ENCODE measurements at regions of chr13 and their contacts with region 1.

Region 1: GRCh38 chr13:95536632-95537241 is 15.8 kb upstream of the CLDN10 start:
- DNase-seq: no peak
- ATAC-seq: no peak
- H3K4me3 Mint-ChIP-seq: no peak overlapping the region
- H3K27ac Mint-ChIP-seq: no peak overlapping the region
- H3K4me1 Mint-ChIP-seq: no peaks in the 10 kb centered on the region
- H3K27me3 Mint-ChIP-seq: peaks cover 18% of the 10 kb centered on the region
- CTCF ChIP-seq: peak; percentile 33

Region 2: DNA sequence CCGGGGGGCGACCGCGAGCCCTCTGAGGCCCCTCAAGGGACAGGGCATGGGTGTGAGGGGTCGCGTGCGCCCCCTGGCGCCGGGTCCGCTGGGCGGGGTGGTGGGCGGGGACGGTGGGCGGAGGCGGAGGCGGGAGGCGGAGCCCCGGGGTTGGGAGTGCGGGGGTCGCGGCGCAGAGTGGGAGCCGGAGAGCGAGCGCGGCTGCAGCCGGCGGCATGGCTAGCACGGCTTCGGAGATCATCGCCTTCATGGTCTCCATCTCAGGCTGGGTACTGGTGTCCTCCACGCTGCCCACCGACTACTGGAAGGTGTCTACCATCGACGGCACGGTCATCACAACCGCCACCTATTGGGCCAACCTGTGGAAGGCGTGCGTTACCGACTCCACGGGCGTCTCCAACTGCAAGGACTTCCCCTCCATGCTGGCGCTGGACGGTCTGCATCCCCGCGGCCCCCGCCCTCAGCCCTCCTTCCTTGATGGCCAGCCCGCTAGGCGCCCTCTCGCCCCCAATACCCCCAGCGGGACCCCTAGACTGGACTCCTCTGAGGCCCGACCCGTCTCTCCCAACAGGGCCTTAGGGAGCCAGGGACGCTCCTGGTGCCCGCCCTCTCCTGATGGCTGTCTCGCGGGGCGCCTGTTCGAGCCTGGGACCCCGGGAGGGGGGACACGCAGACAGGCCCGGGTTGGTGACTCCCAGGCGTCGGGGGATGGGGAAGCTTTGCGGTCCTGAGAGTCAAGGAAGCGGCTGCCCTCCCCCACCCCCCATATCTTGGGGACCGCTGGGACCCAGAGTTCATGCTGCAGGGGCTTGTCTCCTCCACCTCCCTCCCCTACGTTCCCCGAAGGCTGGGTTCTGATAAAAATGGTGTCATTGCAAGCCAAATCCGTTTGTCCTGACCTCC is 16.1 kb after region 1 on chr13 and contains the start of gene CLDN10:
- CTCF ChIA-PET with region 1: no interaction called
- POLR2A ChIA-PET with region 1: no interaction called
- intact Hi-C with region 1: loop called (anchors 1 kb)
- DNase-seq: no peak
- ATAC-seq: no peak
- H3K4me3 Mint-ChIP-seq: no peak within 1 kb of the TSS
- H3K27ac Mint-ChIP-seq: no peak within 1 kb of the TSS
- H3K4me1 Mint-ChIP-seq: peaks cover 12% of the 10 kb centered on the region
- H3K27me3 Mint-ChIP-seq: peaks cover 47% of the 10 kb centered on the region
- CTCF ChIP-seq: no peak
- total RNA-seq, gene CLDN10: not detected in 2 replicates

Region 3: GRCh38 chr13:95579303-95579702 is 42.6 kb after region 1 on chr13:
- CTCF ChIA-PET with region 1: no interaction called
- POLR2A ChIA-PET with region 1: no interaction called
- intact Hi-C with region 1: no loop called
- DNase-seq: no peak
- ATAC-seq: no peak
- H3K4me3 Mint-ChIP-seq: no peak overlapping the region
- H3K27ac Mint-ChIP-seq: no peak overlapping the region
- H3K4me1 Mint-ChIP-seq: no peaks in the 10 kb centered on the region
- H3K27me3 Mint-ChIP-seq: peaks cover 4% of the 10 kb centered on the region
- CTCF ChIP-seq: no peak